ENCODE measurements at regions of chr14 and their contacts with region 1.

Region 1: GRCh38 chr14:70887207-70887681 is 20.0 kb upstream of the PCNX1 start:
- DNase-seq: no peak
- ATAC-seq: peak; percentile 26
- H3K4me3 Mint-ChIP-seq: peak overlapping the region; percentile 55
- H3K27ac Mint-ChIP-seq: peak overlapping the region; percentile 96
- H3K4me1 Mint-ChIP-seq: peaks cover 80% of the 10 kb centered on the region
- H3K27me3 Mint-ChIP-seq: no peaks in the 10 kb centered on the region

Region 2: GRCh38 chr14:70292716-70293115 is 594.5 kb before region 1 on chr14:
- CTCF ChIA-PET with region 1: no interaction called
- POLR2A ChIA-PET with region 1: no interaction called
- intact Hi-C with region 1: no loop called
- DNase-seq: no peak
- ATAC-seq: no peak
- H3K4me3 Mint-ChIP-seq: no peak overlapping the region
- H3K27ac Mint-ChIP-seq: no peak overlapping the region
- H3K4me1 Mint-ChIP-seq: peaks cover 2% of the 10 kb centered on the region
- H3K27me3 Mint-ChIP-seq: peaks cover 4% of the 10 kb centered on the region

Region 3: DNA sequence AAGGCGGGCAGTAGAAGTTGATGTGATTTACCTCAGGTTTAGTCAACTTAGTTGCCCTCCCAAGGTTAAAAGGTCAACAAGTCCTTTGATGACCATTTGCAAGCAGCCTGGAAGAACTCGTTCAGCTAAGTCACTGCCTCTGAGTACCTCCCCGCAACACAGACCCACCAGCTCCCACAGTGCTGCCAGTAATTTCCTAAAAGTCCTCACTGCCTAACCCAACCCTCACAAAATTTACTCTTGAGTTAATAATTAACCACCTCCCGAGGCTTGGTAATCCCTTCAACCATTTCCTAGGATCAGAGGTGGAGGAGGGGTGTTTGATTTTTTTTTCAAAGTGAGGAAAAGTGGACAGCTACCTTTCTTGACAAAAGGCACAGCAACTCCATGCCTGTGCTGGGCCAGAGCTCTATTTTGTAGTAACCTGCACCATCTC is 133.7 kb before region 1 on chr14:
- CTCF ChIA-PET with region 1: no interaction called
- POLR2A ChIA-PET with region 1: no interaction called
- intact Hi-C with region 1: no loop called
- DNase-seq: no peak
- ATAC-seq: no peak
- H3K4me3 Mint-ChIP-seq: no peak overlapping the region
- H3K27ac Mint-ChIP-seq: no peak overlapping the region
- H3K4me1 Mint-ChIP-seq: no peaks in the 10 kb centered on the region
- H3K27me3 Mint-ChIP-seq: no peaks in the 10 kb centered on the region

Region 4: GRCh38 chr14:70809543-70810244 is 77.5 kb before region 1 on chr14:
- CTCF ChIA-PET with region 1: no interaction called
- POLR2A ChIA-PET with region 1: interaction called, 8 read pairs
- intact Hi-C with region 1: loop called in 1 of 2 experiments (anchors 2 kb)
- DNase-seq: peak; percentile 96
- ATAC-seq: peak; percentile 87
- H3K4me3 Mint-ChIP-seq: no peak overlapping the region
- H3K27ac Mint-ChIP-seq: peak overlapping the region; percentile 20
- H3K4me1 Mint-ChIP-seq: peaks cover 4% of the 10 kb centered on the region
- H3K27me3 Mint-ChIP-seq: no peaks in the 10 kb centered on the region

Region 5: DNA sequence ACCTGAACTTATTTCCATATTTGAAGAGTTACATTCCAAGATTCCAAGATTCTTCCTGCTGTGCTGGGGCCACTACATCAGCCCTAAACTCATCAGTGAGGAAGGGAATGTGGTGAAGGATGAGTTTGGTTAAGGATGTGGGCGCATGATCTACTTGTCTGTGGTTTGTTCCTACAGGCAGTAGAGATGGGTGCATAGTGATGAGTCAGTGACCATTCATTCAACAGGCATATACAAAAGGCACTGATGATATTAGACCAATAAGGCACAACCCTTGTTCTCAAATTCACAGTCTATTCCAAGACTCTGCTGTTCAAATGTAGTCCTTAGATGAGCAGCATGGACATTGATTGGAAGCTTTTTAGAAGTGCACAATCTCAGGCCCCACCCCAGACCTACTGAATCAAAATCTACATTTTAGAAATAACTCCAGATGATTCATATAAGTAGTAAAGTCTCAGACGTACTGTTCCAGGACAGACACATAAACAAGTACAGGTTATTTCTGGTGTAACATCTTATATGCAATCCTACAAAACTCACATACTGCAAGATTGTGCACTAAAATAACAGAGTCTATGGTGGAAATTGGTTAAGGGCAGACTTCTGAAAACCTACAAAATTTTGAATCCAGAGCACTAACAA is 30.3 kb before region 1 on chr14:
- CTCF ChIA-PET with region 1: no interaction called
- POLR2A ChIA-PET with region 1: no interaction called
- intact Hi-C with region 1: loop called (anchors 2 kb)
- DNase-seq: peak; percentile 47
- ATAC-seq: peak; percentile 95
- H3K4me3 Mint-ChIP-seq: no peak overlapping the region
- H3K27ac Mint-ChIP-seq: no peak overlapping the region
- H3K4me1 Mint-ChIP-seq: peaks cover 9% of the 10 kb centered on the region
- H3K27me3 Mint-ChIP-seq: no peaks in the 10 kb centered on the region

Region 6: GRCh38 chr14:70907176-70907995 is 20.1 kb after region 1 on chr14 and contains the start of gene PCNX1:
- CTCF ChIA-PET with region 1: interaction called, 173 read pairs
- POLR2A ChIA-PET with region 1: interaction called, 44 read pairs
- intact Hi-C with region 1: loop called (anchors 1 kb)
- DNase-seq: peak; percentile 93
- ATAC-seq: peak; percentile 73
- H3K4me3 Mint-ChIP-seq: peak within 1 kb of the TSS; percentile 96
- H3K27ac Mint-ChIP-seq: peak within 1 kb of the TSS; percentile 94
- H3K4me1 Mint-ChIP-seq: peaks cover 70% of the 10 kb centered on the region
- H3K27me3 Mint-ChIP-seq: no peaks in the 10 kb centered on the region
- total RNA-seq, gene PCNX1: 38.4 to 57.9 TPM

Region 7: DNA sequence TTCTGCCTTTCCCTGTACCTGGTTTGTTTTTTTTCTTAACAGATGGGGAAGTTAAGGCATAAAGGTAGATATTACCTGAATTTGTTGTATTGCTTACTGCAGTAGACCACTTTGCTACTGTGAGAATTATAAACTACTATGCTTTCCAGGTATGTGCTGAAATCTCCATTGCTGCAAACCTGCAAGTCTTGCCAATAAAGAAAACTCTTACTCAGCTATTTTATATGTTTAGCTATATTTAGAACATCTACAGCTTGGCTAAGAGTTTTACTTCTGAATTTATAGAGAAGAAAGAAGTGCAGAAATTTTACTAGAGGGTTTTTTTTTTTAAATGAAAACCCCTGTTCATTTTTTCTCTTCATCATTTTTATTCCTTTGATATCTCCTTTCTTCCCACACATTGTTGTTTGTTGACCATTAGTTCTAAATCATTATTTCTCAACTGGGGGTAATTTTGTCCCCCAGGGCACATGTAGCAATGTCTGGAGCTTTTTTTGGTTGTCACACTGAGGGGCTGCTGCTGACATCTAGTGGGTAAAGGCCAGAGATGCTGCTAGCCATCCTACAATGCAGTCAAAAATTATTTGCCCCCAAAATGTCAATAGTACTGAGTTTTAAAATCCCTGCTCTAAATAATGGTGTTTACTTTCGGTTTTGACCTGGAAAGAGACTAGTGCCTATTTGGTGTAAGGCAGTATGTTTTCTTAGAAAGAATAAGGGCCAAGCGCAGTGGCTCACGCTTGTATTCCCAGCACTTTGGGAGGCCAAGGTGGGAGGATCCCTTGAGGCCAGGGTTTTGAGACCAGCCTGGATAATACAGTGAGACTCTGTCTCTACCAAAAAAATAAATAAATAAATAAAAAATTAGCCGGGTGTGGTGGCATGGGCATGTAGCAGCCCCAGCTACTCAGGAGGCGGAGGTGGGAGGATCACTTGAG is 68.6 kb after region 1 on chr14:
- CTCF ChIA-PET with region 1: interaction called, 11 read pairs
- POLR2A ChIA-PET with region 1: no interaction called
- intact Hi-C with region 1: no loop called
- DNase-seq: peak; percentile 59
- ATAC-seq: peak; percentile 71
- H3K4me3 Mint-ChIP-seq: no peak overlapping the region
- H3K27ac Mint-ChIP-seq: no peak overlapping the region
- H3K4me1 Mint-ChIP-seq: peaks cover 37% of the 10 kb centered on the region
- H3K27me3 Mint-ChIP-seq: no peaks in the 10 kb centered on the region

Region 8: GRCh38 chr14:72049455-72049854 is 1162.2 kb after region 1 on chr14:
- CTCF ChIA-PET with region 1: no interaction called
- POLR2A ChIA-PET with region 1: no interaction called
- intact Hi-C with region 1: loop called in 1 of 2 experiments (anchors 5 kb)
- DNase-seq: peak; percentile 69
- ATAC-seq: peak; percentile 100
- H3K4me3 Mint-ChIP-seq: no peak overlapping the region
- H3K27ac Mint-ChIP-seq: peak overlapping the region; percentile 19
- H3K4me1 Mint-ChIP-seq: peaks cover 12% of the 10 kb centered on the region
- H3K27me3 Mint-ChIP-seq: peaks cover 26% of the 10 kb centered on the region

Measured in activated CD4-positive, alpha-beta T cell treated with anti-CD3 and anti-CD28 coated beads for 36 hours (primary cell).